CD8-positive, alpha-beta T cell (primary cell): ENCODE measurements at regions of chr20 and their contacts with region 1.

Region 1: GRCh38 chr20:36235892-36236785 is at the start of gene AAR2:
- DNase-seq: peak; percentile 57 to 89 (median 78)
- ATAC-seq: peak; percentile 98
- H3K4me3 ChIP-seq: peak within 1 kb of the TSS; percentile 75 to 78
- H3K4me3 Mint-ChIP-seq: peak within 1 kb of the TSS; percentile 96
- H3K27ac ChIP-seq: peak within 1 kb of the TSS; percentile 65 to 69
- H3K27ac Mint-ChIP-seq: peak within 1 kb of the TSS; percentile 93
- H3K4me1 ChIP-seq: peaks cover 32% of the 10 kb centered on the region
- H3K4me1 Mint-ChIP-seq: peaks cover 47% of the 10 kb centered on the region
- H3K27me3 ChIP-seq: peaks cover 0 to 3% of the 10 kb centered on the region in 2 experiments
- H3K27me3 Mint-ChIP-seq: no peaks in the 10 kb centered on the region
- CTCF ChIP-seq: no peak
- total RNA-seq, gene AAR2: 26.9 to 27.8 TPM

Region 2: DNA sequence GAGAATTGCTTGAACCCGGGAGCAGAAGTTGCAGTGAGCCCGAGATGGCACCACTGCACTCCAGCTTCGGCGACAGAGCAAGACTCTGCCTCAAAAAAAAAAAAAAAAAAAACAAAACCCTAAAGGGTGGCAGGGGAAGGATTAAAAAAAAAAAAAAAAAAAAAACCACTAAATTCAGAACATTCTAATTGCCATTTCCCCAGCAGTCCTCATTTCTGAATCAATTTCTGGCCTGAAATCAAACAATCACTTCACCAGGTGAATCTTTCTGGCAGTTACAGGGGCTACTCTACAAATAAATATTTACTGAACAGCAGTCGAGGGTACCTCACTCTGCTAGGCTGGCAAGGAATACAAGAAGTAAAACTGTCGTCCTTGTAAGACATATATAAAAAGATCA is 825.5 kb before region 1 on chr20:
- CTCF ChIA-PET with region 1: no interaction called
- POLR2A ChIA-PET with region 1: no interaction called
- intact Hi-C with region 1: loop called in 1 of 2 experiments (anchors 2 kb)
- DNase-seq: no peak
- ATAC-seq: no peak
- H3K4me3 ChIP-seq: no peak overlapping the region
- H3K4me3 Mint-ChIP-seq: peak overlapping the region; percentile 96
- H3K27ac ChIP-seq: no peak overlapping the region
- H3K27ac Mint-ChIP-seq: peak overlapping the region; percentile 97
- H3K4me1 ChIP-seq: peaks cover 8% of the 10 kb centered on the region
- H3K4me1 Mint-ChIP-seq: peaks cover 25% of the 10 kb centered on the region
- H3K27me3 ChIP-seq: no peaks in the 10 kb centered on the region
- H3K27me3 Mint-ChIP-seq: no peaks in the 10 kb centered on the region
- CTCF ChIP-seq: no peak

Region 3: GRCh38 chr20:35541783-35542588 is 694.2 kb before region 1 on chr20 and contains the start of gene ERGIC3:
- CTCF ChIA-PET with region 1: no interaction called
- POLR2A ChIA-PET with region 1: no interaction called
- intact Hi-C with region 1: loop called in 1 of 2 experiments (anchors 5 kb)
- DNase-seq: peak; percentile 93 to 98 (median 97)
- ATAC-seq: peak; percentile 97
- H3K4me3 ChIP-seq: peak within 1 kb of the TSS; percentile 81 to 94
- H3K4me3 Mint-ChIP-seq: peak within 1 kb of the TSS; percentile 89
- H3K27ac ChIP-seq: peak within 1 kb of the TSS; percentile 71 to 86
- H3K27ac Mint-ChIP-seq: peak within 1 kb of the TSS; percentile 89
- H3K4me1 ChIP-seq: peaks cover 14% of the 10 kb centered on the region
- H3K4me1 Mint-ChIP-seq: peaks cover 27% of the 10 kb centered on the region
- H3K27me3 ChIP-seq: no peaks in the 10 kb centered on the region
- H3K27me3 Mint-ChIP-seq: no peaks in the 10 kb centered on the region
- CTCF ChIP-seq: no peak
- total RNA-seq, gene ERGIC3: 149 TPM

Region 4: GRCh38 chr20:36064658-36065426 is 171.3 kb before region 1 on chr20:
- CTCF ChIA-PET with region 1: no interaction called
- POLR2A ChIA-PET with region 1: interaction called, 3 read pairs
- intact Hi-C with region 1: loop called in 1 of 2 experiments (anchors 10 kb)
- DNase-seq: peak; percentile 85 to 97 (median 93)
- ATAC-seq: peak; percentile 97
- H3K4me3 ChIP-seq: peak overlapping the region; percentile 66 to 74
- H3K4me3 Mint-ChIP-seq: peak overlapping the region; percentile 92
- H3K27ac ChIP-seq: peak overlapping the region; percentile 44 to 48
- H3K27ac Mint-ChIP-seq: peak overlapping the region; percentile 70
- H3K4me1 ChIP-seq: peaks cover 12% of the 10 kb centered on the region
- H3K4me1 Mint-ChIP-seq: peaks cover 5% of the 10 kb centered on the region
- H3K27me3 ChIP-seq: no peaks in the 10 kb centered on the region
- H3K27me3 Mint-ChIP-seq: peaks cover 6% of the 10 kb centered on the region
- CTCF ChIP-seq: no peak

Region 5: DNA sequence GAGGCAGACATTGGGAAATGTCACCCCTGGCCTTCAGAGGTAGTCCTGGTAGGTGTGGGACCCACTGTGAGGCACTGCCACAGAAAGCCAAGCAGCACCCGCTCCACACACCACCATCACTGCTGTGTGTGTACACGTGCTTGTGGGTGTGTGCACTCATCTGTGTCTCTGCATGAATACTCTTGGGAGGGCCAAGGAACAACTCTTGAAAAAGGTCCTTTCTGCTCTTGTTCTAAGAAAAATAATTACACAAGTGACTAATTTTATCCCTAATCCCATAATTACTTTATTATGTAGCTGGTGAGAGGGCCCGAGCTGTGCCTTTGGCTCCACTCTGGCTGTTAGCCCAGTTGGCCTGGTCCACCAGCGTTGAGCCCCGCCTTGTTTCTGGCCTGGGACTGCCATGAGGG is 103.3 kb before region 1 on chr20:
- CTCF ChIA-PET with region 1: no interaction called
- POLR2A ChIA-PET with region 1: no interaction called
- intact Hi-C with region 1: no loop called
- DNase-seq: no peak
- ATAC-seq: no peak
- H3K4me3 ChIP-seq: no peak overlapping the region
- H3K4me3 Mint-ChIP-seq: no peak overlapping the region
- H3K27ac ChIP-seq: no peak overlapping the region
- H3K27ac Mint-ChIP-seq: no peak overlapping the region
- H3K4me1 ChIP-seq: no peaks in the 10 kb centered on the region
- H3K4me1 Mint-ChIP-seq: no peaks in the 10 kb centered on the region
- H3K27me3 ChIP-seq: no peaks in the 10 kb centered on the region
- H3K27me3 Mint-ChIP-seq: no peaks in the 10 kb centered on the region
- CTCF ChIP-seq: no peak

Region 6: DNA sequence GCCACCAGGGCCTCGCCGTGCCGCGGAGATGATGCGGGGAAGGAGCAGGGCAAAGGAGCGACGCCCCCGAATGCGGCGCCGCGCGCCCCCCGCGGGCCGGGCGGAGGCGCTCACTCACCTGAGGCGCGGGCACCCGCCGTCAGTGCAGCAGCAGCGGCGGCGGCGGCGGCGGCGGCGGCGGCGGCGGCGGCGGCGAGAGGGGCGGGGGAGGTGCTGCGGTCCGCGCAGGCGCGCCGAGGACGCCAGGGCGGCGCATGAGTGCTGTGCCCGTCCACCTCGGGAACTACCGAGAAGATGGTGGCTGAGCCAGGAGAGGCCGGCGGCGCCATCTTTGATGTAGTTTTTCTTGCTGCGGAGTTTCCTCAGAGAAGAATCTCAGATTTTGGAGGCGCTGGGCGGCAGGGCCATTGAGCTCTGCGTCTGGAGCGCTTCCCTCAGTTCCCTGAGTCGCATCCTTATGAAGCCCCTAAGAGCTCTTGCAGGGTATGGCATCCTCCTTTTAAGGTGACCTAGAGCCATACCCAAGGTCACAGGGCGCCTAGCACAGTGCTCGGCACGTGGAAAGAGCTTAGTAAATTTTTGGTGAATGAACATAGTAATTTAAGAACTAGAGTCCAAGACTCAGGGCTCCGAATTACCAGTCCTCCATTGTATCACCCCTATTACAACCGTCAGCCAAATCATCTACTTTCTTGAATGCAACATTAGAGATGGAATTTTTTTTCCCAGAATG is 510.0 kb after region 1 on chr20 and contains the start of gene NDRG3:
- CTCF ChIA-PET with region 1: no interaction called
- POLR2A ChIA-PET with region 1: no interaction called
- intact Hi-C with region 1: loop called in 1 of 2 experiments (anchors 5 kb)
- DNase-seq: peak; percentile 85 to 97 (median 92)
- ATAC-seq: peak; percentile 97
- H3K4me3 ChIP-seq: peak within 1 kb of the TSS; percentile 85 to 87
- H3K4me3 Mint-ChIP-seq: peak within 1 kb of the TSS; percentile 88
- H3K27ac ChIP-seq: peak within 1 kb of the TSS; percentile 44 to 74
- H3K27ac Mint-ChIP-seq: peak within 1 kb of the TSS; percentile 90
- H3K4me1 ChIP-seq: peaks cover 7% of the 10 kb centered on the region
- H3K4me1 Mint-ChIP-seq: peaks cover 29% of the 10 kb centered on the region
- H3K27me3 ChIP-seq: no peaks in the 10 kb centered on the region
- H3K27me3 Mint-ChIP-seq: no peaks in the 10 kb centered on the region
- CTCF ChIP-seq: no peak
- total RNA-seq, gene NDRG3: 12.9 to 15.1 TPM

Region 7: DNA sequence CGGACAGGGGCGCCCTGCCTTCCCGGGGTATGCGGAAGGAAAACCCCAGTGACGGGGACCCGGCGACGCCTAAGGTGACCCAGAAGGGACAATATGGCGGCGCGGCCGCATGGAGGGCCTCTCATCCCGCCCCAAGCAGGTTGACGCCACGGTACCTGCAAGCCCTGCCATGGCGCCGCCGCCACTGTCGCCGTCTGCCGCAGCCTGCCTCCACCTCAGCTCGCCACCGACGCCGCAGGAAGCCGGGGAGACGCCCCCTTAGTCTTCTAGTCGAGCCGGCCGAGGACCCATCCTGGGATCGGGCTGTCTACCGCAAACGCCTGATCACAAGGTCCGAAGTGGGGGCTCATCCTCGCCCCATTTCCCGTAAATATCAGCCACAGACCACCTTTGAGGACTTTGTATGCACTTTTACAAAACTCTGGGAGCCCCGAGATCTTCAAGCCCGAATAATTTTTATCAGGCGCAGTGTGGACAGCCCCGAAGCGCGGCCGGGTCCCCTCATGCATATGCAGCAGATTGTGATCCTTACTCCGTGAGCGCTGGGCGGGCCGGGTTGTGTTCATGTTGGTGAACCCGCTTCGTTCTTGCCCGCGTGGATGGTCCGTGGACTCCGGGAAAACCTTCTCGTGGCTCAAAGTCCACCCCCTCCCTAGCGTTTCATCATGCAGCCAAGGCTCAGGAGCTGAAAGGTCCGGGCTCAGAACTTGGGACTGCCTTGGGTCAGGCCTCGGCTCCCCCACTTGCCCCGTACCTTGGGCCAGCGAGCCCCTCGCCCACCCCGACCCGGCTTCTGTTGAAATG is 1291.7 kb after region 1 on chr20 and contains the start of gene BLCAP:
- CTCF ChIA-PET with region 1: no interaction called
- POLR2A ChIA-PET with region 1: no interaction called
- intact Hi-C with region 1: loop called in 1 of 2 experiments (anchors 5 kb)
- DNase-seq: peak; percentile 88 to 96 (median 94)
- ATAC-seq: peak; percentile 90
- H3K4me3 ChIP-seq: peak within 1 kb of the TSS; percentile 93 to 100
- H3K4me3 Mint-ChIP-seq: peak within 1 kb of the TSS; percentile 85
- H3K27ac ChIP-seq: peak within 1 kb of the TSS; percentile 93 to 100
- H3K27ac Mint-ChIP-seq: peak within 1 kb of the TSS; percentile 100
- H3K4me1 ChIP-seq: peaks cover 42% of the 10 kb centered on the region
- H3K4me1 Mint-ChIP-seq: peaks cover 42% of the 10 kb centered on the region
- H3K27me3 ChIP-seq: no peaks in the 10 kb centered on the region
- H3K27me3 Mint-ChIP-seq: no peaks in the 10 kb centered on the region
- CTCF ChIP-seq: no peak
- total RNA-seq, gene BLCAP: 60.1 to 60.6 TPM

Region 8: GRCh38 chr20:37693635-37694626 is 1457.8 kb after region 1 on chr20 and contains the start of gene CTNNBL1:
- CTCF ChIA-PET with region 1: no interaction called
- POLR2A ChIA-PET with region 1: no interaction called
- intact Hi-C with region 1: loop called in 1 of 2 experiments (anchors 10 kb)
- DNase-seq: peak; percentile 91 to 98 (median 96)
- ATAC-seq: peak; percentile 99
- H3K4me3 ChIP-seq: peak within 1 kb of the TSS; percentile 76 to 85
- H3K4me3 Mint-ChIP-seq: peak within 1 kb of the TSS; percentile 98
- H3K27ac ChIP-seq: peak within 1 kb of the TSS; percentile 60 to 61
- H3K27ac Mint-ChIP-seq: peak within 1 kb of the TSS; percentile 90
- H3K4me1 ChIP-seq: peaks cover 12% of the 10 kb centered on the region
- H3K4me1 Mint-ChIP-seq: peaks cover 43% of the 10 kb centered on the region
- H3K27me3 ChIP-seq: peaks cover 0 to 7% of the 10 kb centered on the region in 2 experiments
- H3K27me3 Mint-ChIP-seq: peaks cover 16% of the 10 kb centered on the region
- CTCF ChIP-seq: no peak
- total RNA-seq, gene CTNNBL1: 22.4 to 26.8 TPM